B cell (primary cell): ENCODE measurements at regions of chr10 and their contacts with region 1.

Region 1: GRCh38 chr10:2985729-2986232 is 81.6 kb upstream of the PFKP start:
- DNase-seq: no peak
- ATAC-seq: no peak
- H3K4me3 ChIP-seq: peak overlapping the region; percentile 22 to 57 (median 46)
- H3K4me3 Mint-ChIP-seq: peak overlapping the region; percentile 67
- H3K27ac ChIP-seq: peak overlapping the region; percentile 19 to 27
- H3K27ac Mint-ChIP-seq: peak overlapping the region; percentile 8
- H3K4me1 ChIP-seq: peaks cover 30 to 61% of the 10 kb centered on the region in 2 donors
- H3K4me1 Mint-ChIP-seq: peaks cover 37% of the 10 kb centered on the region
- H3K27me3 ChIP-seq: peaks cover 0 to 14% (median 1%) of the 10 kb centered on the region in 4 experiments
- H3K27me3 Mint-ChIP-seq: peaks cover 7% of the 10 kb centered on the region
- CTCF ChIP-seq: no peak

Region 2: DNA sequence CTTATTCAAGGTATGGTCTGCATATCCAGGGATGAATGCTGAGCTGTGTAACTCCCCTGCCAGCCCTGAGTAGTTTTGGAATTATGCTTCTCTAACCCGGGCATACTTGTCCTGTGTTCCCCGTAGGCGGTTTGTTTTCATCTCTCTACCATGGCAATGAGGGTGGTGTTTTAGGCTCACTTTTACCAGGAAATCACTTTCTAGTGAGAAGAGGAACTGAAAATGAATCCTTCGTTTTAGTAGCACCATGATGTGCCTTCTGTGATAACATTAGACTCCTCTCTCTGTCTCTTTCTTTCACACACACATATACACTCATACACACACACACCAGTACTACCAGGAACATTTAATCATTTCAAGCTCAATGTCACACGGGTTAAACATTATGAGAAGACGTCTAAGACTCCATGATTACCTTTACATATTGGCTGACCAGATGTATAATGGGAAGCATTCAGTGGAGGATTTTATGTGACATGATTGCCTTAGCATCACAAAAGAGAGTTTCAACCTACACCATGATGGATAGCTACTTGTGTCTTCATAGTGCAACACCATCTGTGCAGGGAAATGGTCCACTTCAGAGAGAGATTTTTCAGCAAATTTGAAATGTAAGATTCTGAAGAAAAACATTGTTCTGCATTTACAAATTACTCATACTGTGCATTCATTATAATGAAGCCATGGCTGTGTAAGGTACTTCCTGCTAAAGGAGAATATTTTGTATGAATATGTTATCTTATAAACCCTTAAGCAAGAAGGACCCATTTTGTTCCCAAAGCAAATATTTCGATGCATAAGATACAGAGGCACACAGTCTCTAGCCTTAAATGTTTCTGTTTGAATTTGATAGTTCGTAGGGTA is 50.6 kb after region 1 on chr10:
- CTCF ChIA-PET with region 1: no interaction called
- POLR2A ChIA-PET with region 1: no interaction called
- intact Hi-C with region 1: loop called (anchors 10 kb)
- DNase-seq: peak; percentile 77
- ATAC-seq: peak; percentile 87
- H3K4me3 ChIP-seq: peak overlapping the region in 1 of 5 experiments; percentile 45
- H3K4me3 Mint-ChIP-seq: peak overlapping the region; percentile 62
- H3K27ac ChIP-seq: peak overlapping the region; percentile 86 to 92
- H3K27ac Mint-ChIP-seq: peak overlapping the region; percentile 82
- H3K4me1 ChIP-seq: peaks cover 37 to 42% of the 10 kb centered on the region in 2 donors
- H3K4me1 Mint-ChIP-seq: peaks cover 42% of the 10 kb centered on the region
- H3K27me3 ChIP-seq: no peaks in the 10 kb centered on the region
- H3K27me3 Mint-ChIP-seq: no peaks in the 10 kb centered on the region
- CTCF ChIP-seq: no peak

Region 3: DNA sequence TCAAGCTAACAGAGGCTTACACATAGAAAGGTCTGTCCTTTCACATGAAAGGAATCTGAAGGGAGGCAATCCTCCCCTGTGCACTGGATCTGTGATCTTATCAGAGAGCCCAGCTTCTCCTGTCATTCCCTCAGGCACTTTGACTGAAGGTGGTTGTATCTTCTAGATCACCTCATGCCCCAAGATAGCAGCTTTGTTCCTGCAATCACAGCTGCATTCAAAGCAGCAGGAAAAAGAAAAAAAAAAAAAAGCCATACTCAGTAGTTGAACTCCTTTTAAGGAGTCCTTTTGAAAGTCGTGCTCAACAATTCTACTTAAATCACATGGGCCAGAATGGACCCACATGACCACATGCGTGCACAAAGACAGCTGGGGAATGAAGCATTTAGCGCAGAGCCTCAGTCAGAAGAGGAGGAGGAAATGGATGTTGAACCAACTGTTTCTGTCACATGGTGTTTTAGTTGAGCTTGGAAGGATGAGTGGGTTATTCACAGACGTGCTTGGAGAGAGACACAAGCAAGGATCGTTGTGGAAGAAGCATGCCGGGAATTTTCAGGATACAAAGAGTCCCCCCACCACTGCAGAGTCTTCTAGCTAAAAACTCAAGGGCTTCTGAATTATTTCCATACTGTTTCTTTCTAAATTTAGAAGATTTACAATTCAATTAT is 68.5 kb after region 1 on chr10:
- CTCF ChIA-PET with region 1: no interaction called
- POLR2A ChIA-PET with region 1: no interaction called
- intact Hi-C with region 1: no loop called
- DNase-seq: no peak
- ATAC-seq: no peak
- H3K4me3 ChIP-seq: no peak overlapping the region
- H3K4me3 Mint-ChIP-seq: no peak overlapping the region
- H3K27ac ChIP-seq: no peak overlapping the region
- H3K27ac Mint-ChIP-seq: no peak overlapping the region
- H3K4me1 ChIP-seq: no peaks in the 10 kb centered on the region
- H3K4me1 Mint-ChIP-seq: no peaks in the 10 kb centered on the region
- H3K27me3 ChIP-seq: peaks cover 0 to 11% (median 0%) of the 10 kb centered on the region in 4 experiments
- H3K27me3 Mint-ChIP-seq: peaks cover 28% of the 10 kb centered on the region
- CTCF ChIP-seq: no peak

Region 4: GRCh38 chr10:3107426-3107961 is 121.7 kb after region 1 on chr10:
- CTCF ChIA-PET with region 1: no interaction called
- POLR2A ChIA-PET with region 1: no interaction called
- intact Hi-C with region 1: no loop called
- DNase-seq: no peak
- ATAC-seq: no peak
- H3K4me3 ChIP-seq: no peak overlapping the region
- H3K4me3 Mint-ChIP-seq: no peak overlapping the region
- H3K27ac ChIP-seq: no peak overlapping the region
- H3K27ac Mint-ChIP-seq: no peak overlapping the region
- H3K4me1 ChIP-seq: peaks cover 4 to 7% of the 10 kb centered on the region in 2 donors
- H3K4me1 Mint-ChIP-seq: peaks cover 17% of the 10 kb centered on the region
- H3K27me3 ChIP-seq: no peaks in the 10 kb centered on the region
- H3K27me3 Mint-ChIP-seq: no peaks in the 10 kb centered on the region
- CTCF ChIP-seq: no peak